Left colon (tissue), 2 donors: ENCODE measurements at regions of chr9 and their contacts with region 1.

Region 1: DNA sequence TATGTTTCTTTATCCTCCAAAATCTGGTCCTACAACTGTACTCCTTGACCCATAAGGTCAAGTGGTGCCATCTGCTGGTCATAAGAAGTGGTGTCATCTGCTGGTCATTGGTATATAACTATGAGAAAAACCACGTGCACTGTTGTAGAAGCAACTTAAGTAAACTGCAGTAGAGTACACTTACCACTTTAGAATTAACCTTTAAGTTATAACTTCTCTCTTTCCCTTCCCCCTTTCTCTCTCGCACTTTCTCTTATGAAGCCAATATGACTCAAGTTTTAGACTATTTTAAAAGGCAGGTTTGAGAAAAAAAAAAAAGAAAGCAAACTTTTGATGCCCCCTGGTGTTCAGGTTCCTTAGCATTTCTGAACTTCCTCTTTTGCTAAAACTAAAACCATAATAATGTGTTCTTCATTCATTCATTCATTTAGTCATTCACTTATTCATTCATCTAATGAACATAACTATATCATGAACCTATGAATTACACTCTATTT is 12.8 kb upstream of the MTAP start:
- DNase-seq: peak; percentile 42 to 45
- ATAC-seq: peak; percentile 94

Region 2: DNA sequence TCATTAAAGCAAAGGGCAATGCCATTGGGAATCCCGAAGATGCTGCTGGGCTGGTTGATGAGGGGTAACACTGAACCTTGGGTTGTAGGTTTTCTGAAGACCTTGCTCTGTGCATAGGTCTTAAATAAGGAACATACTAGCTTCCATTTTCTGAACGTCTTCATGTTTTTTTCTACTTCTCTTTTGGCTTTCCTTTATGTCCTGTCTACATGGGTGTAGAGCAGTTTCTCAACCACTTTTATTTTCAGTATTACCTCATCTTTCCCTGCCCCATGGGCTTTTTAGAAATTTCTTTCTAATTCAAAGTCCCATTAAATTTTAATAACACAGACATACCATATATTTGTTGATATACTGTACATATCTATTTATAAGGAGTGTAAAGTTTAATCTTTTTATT is 549.7 kb before region 1 on chr9 and contains the start of gene IFNA14:
- intact Hi-C with region 1: loop called in 1 of 2 experiments (anchors 10 kb)
- DNase-seq: no peak
- ATAC-seq: no peak
- total RNA-seq, gene IFNA14: not detected

Region 3: GRCh38 chr9:21317956-21318923 is 471.3 kb before region 1 on chr9:
- intact Hi-C with region 1: loop called in 1 of 2 experiments (anchors 5 kb)
- DNase-seq: peak in 1 of 2 donors; percentile 36
- ATAC-seq: peak; percentile 85

Region 4: GRCh38 chr9:21616082-21616778 is 173.4 kb before region 1 on chr9:
- intact Hi-C with region 1: no loop called
- DNase-seq: no peak
- ATAC-seq: no peak

Region 5: DNA sequence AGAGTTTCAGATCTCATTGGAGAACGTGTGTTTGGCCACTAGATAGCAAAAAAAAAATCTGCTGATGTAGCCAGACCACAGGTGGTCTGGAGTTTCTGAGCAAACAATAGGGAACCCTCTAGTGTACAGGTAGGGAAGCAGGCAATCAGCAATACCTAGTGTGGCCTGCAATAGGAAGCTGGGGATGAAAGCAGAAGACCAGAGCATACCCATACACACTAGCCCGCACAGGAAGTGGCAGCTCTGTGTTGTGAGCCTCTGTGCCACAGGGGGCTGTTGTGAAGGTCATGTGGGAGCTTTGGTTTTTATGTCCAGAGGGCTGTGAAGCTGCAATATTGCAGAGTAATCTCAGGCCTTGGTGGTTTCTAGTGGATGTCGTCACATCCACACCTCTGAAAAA is 94.1 kb after region 1 on chr9:
- intact Hi-C with region 1: no loop called
- DNase-seq: no peak
- ATAC-seq: no peak

Region 6: DNA sequence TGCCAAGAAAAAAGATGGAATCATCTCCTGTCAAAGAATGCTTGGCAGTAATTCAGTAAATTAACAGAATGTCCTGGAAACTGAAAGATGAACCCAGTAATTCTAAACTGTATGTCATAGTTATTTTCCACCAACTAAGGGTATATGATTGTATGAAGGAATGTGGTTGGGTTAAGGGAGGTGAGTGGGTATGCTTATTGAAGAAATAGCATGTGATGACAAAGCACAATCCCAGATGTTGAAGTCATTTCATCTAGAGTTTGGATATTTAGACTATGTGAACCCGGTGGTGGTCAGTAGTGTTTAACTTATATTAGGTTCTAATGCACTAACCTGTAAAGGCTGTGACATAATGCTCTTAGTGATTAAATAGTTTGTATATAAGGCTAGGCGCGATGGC is 117.3 kb after region 1 on chr9:
- intact Hi-C with region 1: no loop called
- DNase-seq: no peak
- ATAC-seq: no peak